Left lung (tissue), 14 donors: ENCODE measurements at regions of chr22 and their contacts with region 1.

Region 1: GRCh38 chr22:43993027-43993760 is 30.9 kb upstream of the PARVB start:
- DNase-seq: peak; percentile 38 to 75 (median 54)
- ATAC-seq: peak; percentile 90
- H3K4me3 ChIP-seq: no peak overlapping the region
- H3K27ac ChIP-seq: no peak overlapping the region
- H3K4me1 ChIP-seq: peaks cover 0 to 13% of the 10 kb centered on the region in 2 donors
- H3K27me3 ChIP-seq: no peaks in the 10 kb centered on the region
- CTCF ChIP-seq: peak; percentile 96 to 97

Region 2: GRCh38 chr22:44057401-44057987 is 64.3 kb after region 1 on chr22:
- intact Hi-C with region 1: no loop called
- DNase-seq: peak in 2 of 4 donors; percentile 27 to 49
- ATAC-seq: no peak
- H3K4me3 ChIP-seq: no peak overlapping the region
- H3K27ac ChIP-seq: peak overlapping the region in 1 of 2 donors; percentile 13
- H3K4me1 ChIP-seq: peaks cover 5 to 8% of the 10 kb centered on the region in 2 donors
- H3K27me3 ChIP-seq: no peaks in the 10 kb centered on the region
- CTCF ChIP-seq: no peak

Region 3: DNA sequence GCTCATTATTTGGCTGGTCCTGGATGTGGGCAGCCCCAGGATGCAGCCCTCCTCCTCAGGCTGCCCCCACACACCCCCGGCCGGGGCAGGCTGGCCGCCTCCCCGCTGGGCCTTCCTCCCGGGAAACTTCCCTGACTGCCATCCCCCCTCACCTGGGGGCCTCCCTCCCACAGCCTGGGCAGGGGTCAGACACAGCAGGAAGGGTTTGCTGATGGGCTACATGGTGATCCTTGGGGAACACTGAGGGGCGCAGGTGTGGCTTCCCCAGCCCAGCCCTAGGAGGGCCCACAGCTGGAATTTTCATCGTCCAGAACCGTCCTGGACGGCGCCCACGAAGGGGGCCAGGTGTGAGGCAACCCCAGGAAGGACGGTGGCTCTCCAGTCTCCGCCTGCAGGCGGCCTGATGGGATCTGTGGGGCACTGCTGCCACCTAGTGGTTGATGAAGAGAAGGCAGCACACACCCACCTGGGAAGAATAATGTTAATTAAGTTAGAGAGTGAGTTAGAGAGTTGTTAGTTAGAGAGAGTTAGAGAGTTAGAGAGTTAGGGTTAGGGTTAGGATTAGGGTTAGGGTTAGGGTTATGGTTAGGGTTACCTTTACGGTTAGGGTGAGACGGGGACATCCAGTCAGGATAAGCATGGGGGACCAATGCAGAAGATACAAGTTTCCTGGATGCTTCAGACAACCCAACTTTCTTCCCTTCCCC is 632.9 kb after region 1 on chr22:
- intact Hi-C with region 1: loop called in 1 of 2 experiments (anchors 10 kb)
- DNase-seq: peak; percentile 55 to 91 (median 75)
- ATAC-seq: peak; percentile 95
- H3K4me3 ChIP-seq: no peak overlapping the region
- H3K27ac ChIP-seq: no peak overlapping the region
- H3K4me1 ChIP-seq: no peaks in the 10 kb centered on the region
- H3K27me3 ChIP-seq: peaks cover 0 to 59% of the 10 kb centered on the region in 2 donors
- CTCF ChIP-seq: peak; percentile 97 to 98